Naive thymus-derived CD4-positive, alpha-beta T cell (primary cell): ENCODE measurements at regions of chr15 and their contacts with region 1.

Region 1: GRCh38 chr15:40694688-40695468 is at the start of gene RAD51:
- DNase-seq: peak; percentile 81 to 93 (median 92)
- ATAC-seq: peak; percentile 97
- H3K4me3 ChIP-seq: peak within 1 kb of the TSS; percentile 97
- H3K4me3 Mint-ChIP-seq: peak within 1 kb of the TSS; percentile 93 to 100 (median 95)
- H3K27ac ChIP-seq: peak within 1 kb of the TSS; percentile 91
- H3K27ac Mint-ChIP-seq: peak within 1 kb of the TSS; percentile 95 to 100 (median 99)
- H3K4me1 ChIP-seq: peaks cover 10% of the 10 kb centered on the region in 2 donors
- H3K4me1 Mint-ChIP-seq: peaks cover 14 to 42% (median 22%) of the 10 kb centered on the region in 7 donors
- H3K27me3 ChIP-seq: no peaks in the 10 kb centered on the region
- H3K27me3 Mint-ChIP-seq: no peaks in the 10 kb centered on the region
- total RNA-seq, gene RAD51: 0.51 to 51.5 (median 1.4) TPM

Region 2: GRCh38 chr15:40440743-40441564 is 253.9 kb before region 1 on chr15 and contains the start of gene BAHD1:
- CTCF ChIA-PET with region 1: interaction called, 3 read pairs
- POLR2A ChIA-PET with region 1: no interaction called
- intact Hi-C with region 1: loop called in 1 of 2 experiments (anchors 1 kb)
- DNase-seq: peak; percentile 85 to 97 (median 89)
- ATAC-seq: peak; percentile 94
- H3K4me3 ChIP-seq: peak within 1 kb of the TSS; percentile 60
- H3K4me3 Mint-ChIP-seq: peak within 1 kb of the TSS; percentile 88 to 99 (median 94)
- H3K27ac ChIP-seq: peak within 1 kb of the TSS; percentile 77
- H3K27ac Mint-ChIP-seq: peak within 1 kb of the TSS in 8 of 9 donors; percentile 71 to 93 (median 84)
- H3K4me1 ChIP-seq: peaks cover 20 to 44% of the 10 kb centered on the region in 2 donors
- H3K4me1 Mint-ChIP-seq: peaks cover 46 to 64% (median 60%) of the 10 kb centered on the region in 7 donors
- H3K27me3 ChIP-seq: peaks cover 0 to 5% of the 10 kb centered on the region in 2 donors
- H3K27me3 Mint-ChIP-seq: peaks cover 15 to 65% (median 22%) of the 10 kb centered on the region in 5 donors
- total RNA-seq, gene BAHD1: 28.4 to 48.8 (median 31.2) TPM

Region 3: GRCh38 chr15:40684381-40684780 is 10.5 kb before region 1 on chr15:
- CTCF ChIA-PET with region 1: no interaction called
- POLR2A ChIA-PET with region 1: interaction called, 9 read pairs
- intact Hi-C with region 1: loop called in 1 of 2 experiments (anchors 1 kb)
- DNase-seq: no peak
- ATAC-seq: no peak
- H3K4me3 ChIP-seq: no peak overlapping the region
- H3K4me3 Mint-ChIP-seq: no peak overlapping the region
- H3K27ac ChIP-seq: no peak overlapping the region
- H3K27ac Mint-ChIP-seq: peak overlapping the region in 3 of 9 donors; percentile 41 to 57 (median 47)
- H3K4me1 ChIP-seq: no peaks in the 10 kb centered on the region
- H3K4me1 Mint-ChIP-seq: peaks cover 0 to under 1% (median 0%) of the 10 kb centered on the region in 7 donors
- H3K27me3 ChIP-seq: no peaks in the 10 kb centered on the region
- H3K27me3 Mint-ChIP-seq: peaks cover 0 to 3% (median 0%) of the 10 kb centered on the region in 5 donors

Region 4: DNA sequence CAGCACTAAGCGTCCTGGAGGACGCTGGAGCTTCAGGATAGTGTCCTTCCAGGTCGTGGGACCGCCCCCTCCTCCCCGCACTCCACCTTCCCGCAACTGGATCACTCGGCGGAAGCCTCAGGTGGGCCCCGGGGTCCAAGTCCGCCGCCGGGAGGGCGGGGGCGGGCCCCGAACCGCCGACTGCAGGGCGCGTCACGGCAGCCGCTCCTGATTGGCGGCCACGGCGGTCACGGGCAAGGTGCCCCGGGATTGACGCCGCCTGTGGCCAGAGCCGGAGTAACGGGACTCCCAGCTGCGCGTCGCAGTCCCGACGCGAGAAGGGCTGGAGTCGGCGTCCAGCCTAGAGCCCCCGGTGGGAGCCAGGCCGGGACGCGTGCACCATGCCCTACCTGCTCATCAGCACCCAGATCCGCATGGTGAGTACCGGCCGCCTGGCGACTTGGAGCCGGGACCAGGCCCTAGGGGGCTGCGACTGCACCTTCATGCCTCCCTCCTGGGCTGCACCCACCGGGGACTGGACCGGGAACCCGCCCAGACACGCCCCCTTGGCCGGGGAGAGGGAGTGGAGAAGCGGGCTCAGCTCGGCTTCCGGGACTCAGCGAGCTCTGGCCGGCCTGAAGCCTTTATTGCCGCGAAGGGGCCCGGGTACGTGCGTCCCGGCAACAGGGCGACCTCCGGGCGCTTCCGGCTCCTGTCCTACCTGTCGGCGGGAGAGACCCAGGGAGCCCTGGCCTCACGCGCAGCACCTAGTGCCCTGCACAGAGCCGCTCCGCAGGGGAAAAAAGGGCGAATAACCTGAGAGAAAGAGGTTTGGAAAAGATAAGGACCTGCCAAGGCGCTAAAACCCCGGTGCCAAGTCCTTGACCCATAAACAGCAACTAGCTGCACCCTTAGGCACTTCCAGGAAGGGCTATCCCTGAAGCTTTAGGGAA is 69.2 kb after region 1 on chr15 and contains the start of gene GCHFR:
- CTCF ChIA-PET with region 1: no interaction called
- POLR2A ChIA-PET with region 1: interaction called, 21 read pairs
- intact Hi-C with region 1: loop called (anchors 1 kb)
- DNase-seq: peak; percentile 53 to 86 (median 57)
- ATAC-seq: peak; percentile 72
- H3K4me3 ChIP-seq: peak within 1 kb of the TSS; percentile 71
- H3K4me3 Mint-ChIP-seq: peak within 1 kb of the TSS; percentile 76 to 94 (median 90)
- H3K27ac ChIP-seq: peak within 1 kb of the TSS; percentile 78
- H3K27ac Mint-ChIP-seq: peak within 1 kb of the TSS; percentile 82 to 94 (median 87)
- H3K4me1 ChIP-seq: peaks cover 17 to 21% of the 10 kb centered on the region in 2 donors
- H3K4me1 Mint-ChIP-seq: peaks cover 10 to 39% (median 36%) of the 10 kb centered on the region in 7 donors
- H3K27me3 ChIP-seq: no peaks in the 10 kb centered on the region
- H3K27me3 Mint-ChIP-seq: no peaks in the 10 kb centered on the region
- total RNA-seq, gene GCHFR: 14.5 to 38.3 (median 18.1) TPM

Region 5: DNA sequence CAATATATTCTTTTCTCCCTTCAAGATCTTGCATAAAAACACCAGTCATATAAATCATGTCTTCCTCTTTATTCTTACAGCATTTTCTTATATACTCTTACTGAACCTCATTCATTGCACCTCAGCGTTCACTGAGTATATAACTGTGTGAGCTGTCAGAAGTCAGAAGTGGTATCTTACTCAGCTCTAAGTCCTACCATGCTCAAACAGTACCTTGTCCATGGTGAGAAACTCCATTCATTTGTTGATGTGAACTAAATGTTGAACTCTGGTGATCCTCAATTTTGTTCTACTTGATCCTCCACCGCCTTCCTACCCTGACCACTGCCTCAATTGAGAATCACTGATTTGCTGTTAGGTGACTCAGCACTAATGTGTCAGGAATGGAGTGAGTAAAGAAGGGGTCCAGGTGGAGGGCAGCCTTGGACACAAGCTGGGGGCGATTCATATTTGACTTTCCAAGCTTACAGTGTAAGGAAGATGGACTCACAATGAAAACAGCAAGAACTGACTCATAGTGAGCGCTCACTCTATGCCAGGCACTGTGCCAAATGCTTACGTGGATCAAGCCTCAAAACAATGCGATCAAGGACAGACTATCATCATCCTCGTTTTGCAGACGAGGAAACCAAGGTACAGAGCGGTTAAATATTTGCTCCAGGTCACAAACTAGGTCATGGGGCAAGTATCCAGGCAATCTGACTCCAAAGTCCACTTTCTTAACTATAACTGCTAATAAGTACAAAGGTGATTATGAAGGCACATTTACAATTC is 98.5 kb after region 1 on chr15:
- CTCF ChIA-PET with region 1: no interaction called
- POLR2A ChIA-PET with region 1: no interaction called
- intact Hi-C with region 1: no loop called
- DNase-seq: no peak
- ATAC-seq: no peak
- H3K4me3 ChIP-seq: no peak overlapping the region
- H3K4me3 Mint-ChIP-seq: no peak overlapping the region
- H3K27ac ChIP-seq: no peak overlapping the region
- H3K27ac Mint-ChIP-seq: no peak overlapping the region
- H3K4me1 ChIP-seq: no peaks in the 10 kb centered on the region
- H3K4me1 Mint-ChIP-seq: peaks cover 13 to 33% (median 27%) of the 10 kb centered on the region in 7 donors
- H3K27me3 ChIP-seq: no peaks in the 10 kb centered on the region
- H3K27me3 Mint-ChIP-seq: no peaks in the 10 kb centered on the region

Region 6: DNA sequence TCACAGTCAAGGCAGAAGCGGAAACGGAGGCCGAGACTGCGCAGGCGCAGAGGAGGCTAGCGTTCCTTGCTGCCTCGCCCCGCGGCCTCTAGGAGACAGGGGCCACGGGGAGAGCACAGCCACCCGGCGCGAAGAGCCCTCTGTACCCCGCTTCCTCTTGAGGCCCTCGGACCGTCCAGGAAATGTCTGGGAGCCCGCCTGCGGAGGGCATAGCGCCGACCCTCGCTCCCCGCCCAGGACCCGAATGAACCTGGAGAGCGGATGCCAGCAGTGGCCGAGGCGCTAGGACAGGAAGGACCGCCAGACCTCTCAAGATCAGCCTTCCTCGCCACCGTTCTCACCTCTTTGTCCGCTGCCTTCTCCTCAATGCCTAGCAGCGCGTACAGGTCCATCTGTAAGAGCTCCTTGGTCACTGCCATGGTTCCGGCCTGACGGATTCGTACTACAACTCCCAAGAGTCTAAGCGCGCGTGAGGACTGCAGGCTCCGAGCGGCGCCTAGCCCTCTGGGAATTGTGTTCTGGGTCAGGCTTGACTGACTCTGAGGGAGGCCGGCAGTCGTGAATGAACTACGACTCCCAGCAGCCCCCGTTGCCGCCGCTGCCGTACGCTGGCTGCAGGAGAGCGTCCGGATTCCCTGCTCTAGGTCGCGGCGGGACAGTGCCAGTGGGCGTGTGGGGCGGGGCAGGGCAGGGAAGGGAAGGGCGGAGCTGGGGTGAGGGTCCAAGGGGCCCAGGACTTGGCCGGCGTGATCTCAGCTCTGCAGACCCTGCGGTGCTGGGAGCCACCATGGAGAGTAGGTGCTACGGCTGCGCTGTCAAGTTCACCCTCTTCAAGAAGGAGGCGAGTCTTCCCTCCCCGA is 112.4 kb after region 1 on chr15 and contains the starts of genes DNAJC17 and ZFYVE19:
- CTCF ChIA-PET with region 1: no interaction called
- POLR2A ChIA-PET with region 1: interaction called, 14 read pairs
- intact Hi-C with region 1: loop called (anchors 1 kb)
- DNase-seq: peak; percentile 86 to 96 (median 91)
- ATAC-seq: peak; percentile 99
- H3K4me3 ChIP-seq: peak within 1 kb of the TSS; percentile 99
- H3K4me3 Mint-ChIP-seq: peak within 1 kb of the TSS; percentile 92 to 98 (median 96)
- H3K27ac ChIP-seq: peak within 1 kb of the TSS; percentile 95
- H3K27ac Mint-ChIP-seq: peak within 1 kb of the TSS; percentile 84 to 98 (median 96)
- H3K4me1 ChIP-seq: peaks cover 14 to 16% of the 10 kb centered on the region in 2 donors
- H3K4me1 Mint-ChIP-seq: peaks cover 17 to 43% (median 25%) of the 10 kb centered on the region in 7 donors
- H3K27me3 ChIP-seq: no peaks in the 10 kb centered on the region
- H3K27me3 Mint-ChIP-seq: no peaks in the 10 kb centered on the region
- total RNA-seq, gene DNAJC17: 28.8 to 50.9 (median 36.7) TPM
- total RNA-seq, gene ZFYVE19: 17.9 to 31.9 (median 30.5) TPM

Region 7: GRCh38 chr15:41416742-41417406 is 722.0 kb after region 1 on chr15 and contains the start of gene RTF1:
- CTCF ChIA-PET with region 1: no interaction called
- POLR2A ChIA-PET with region 1: interaction called, 3 read pairs
- intact Hi-C with region 1: loop called in 1 of 2 experiments (anchors 5 kb)
- DNase-seq: peak; percentile 92 to 100 (median 96)
- ATAC-seq: peak; percentile 99
- H3K4me3 ChIP-seq: peak within 1 kb of the TSS; percentile 98
- H3K4me3 Mint-ChIP-seq: peak within 1 kb of the TSS; percentile 86 to 96 (median 95)
- H3K27ac ChIP-seq: peak within 1 kb of the TSS; percentile 81
- H3K27ac Mint-ChIP-seq: peak within 1 kb of the TSS; percentile 74 to 98 (median 93)
- H3K4me1 ChIP-seq: peaks cover 6 to 16% of the 10 kb centered on the region in 2 donors
- H3K4me1 Mint-ChIP-seq: peaks cover 34 to 53% (median 43%) of the 10 kb centered on the region in 7 donors
- H3K27me3 ChIP-seq: no peaks in the 10 kb centered on the region
- H3K27me3 Mint-ChIP-seq: no peaks in the 10 kb centered on the region
- total RNA-seq, gene RTF1: 34.0 to 41.3 (median 37.2) TPM